CD4-positive, alpha-beta T cell (primary cell): ENCODE measurements at regions of chr3 and their contacts with region 1.

Region 1: GRCh38 chr3:36944012-36944640 is 728 bp downstream of the TRANK1 start:
- DNase-seq: peak; percentile 2 to 55 (median 22)
- ATAC-seq: peak; percentile 35
- H3K4me3 ChIP-seq: peak overlapping the region; percentile 79
- H3K4me3 Mint-ChIP-seq: peak overlapping the region; percentile 89
- H3K27ac ChIP-seq: peak overlapping the region in 1 of 2 donors; percentile 61
- H3K27ac Mint-ChIP-seq: peak overlapping the region; percentile 73
- H3K4me1 ChIP-seq: peaks cover 22% of the 10 kb centered on the region
- H3K4me1 Mint-ChIP-seq: peaks cover 21% of the 10 kb centered on the region
- H3K27me3 ChIP-seq: no peaks in the 10 kb centered on the region
- H3K27me3 Mint-ChIP-seq: no peaks in the 10 kb centered on the region
- CTCF ChIP-seq: no peak

Region 2: DNA sequence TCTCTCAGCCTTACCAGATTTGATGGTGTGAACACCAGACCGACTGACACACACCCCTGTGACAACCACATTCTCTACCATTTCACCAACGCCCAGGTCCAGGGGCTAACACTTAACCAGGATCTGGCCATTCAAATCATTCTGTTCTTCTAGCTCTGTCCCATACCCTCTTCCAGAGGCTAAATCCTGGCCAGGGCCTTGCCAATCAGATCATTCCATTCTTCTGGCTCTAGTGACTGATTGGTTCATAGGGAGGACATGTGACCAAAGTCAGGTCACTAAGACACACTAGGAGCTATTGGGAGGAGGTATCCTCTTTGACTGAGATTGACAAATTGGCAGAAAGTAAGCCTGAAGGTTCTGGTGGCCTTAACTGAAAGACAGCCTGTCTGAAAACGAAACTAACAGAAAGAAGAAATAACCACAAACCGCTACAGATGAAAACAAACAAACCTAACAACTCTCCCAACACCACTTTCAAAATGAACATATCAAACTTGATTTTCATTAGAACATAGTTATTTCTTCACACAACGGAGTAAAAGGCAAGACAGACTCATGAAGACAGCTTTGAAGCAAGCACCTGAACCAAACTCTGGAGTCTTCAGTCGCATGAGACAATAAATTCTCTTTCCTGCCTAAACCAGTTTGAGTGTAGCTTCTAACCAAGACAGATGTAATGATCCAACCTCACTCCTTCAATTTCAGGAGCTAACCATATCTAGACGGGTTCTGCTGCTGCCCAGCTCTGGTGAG is 67.8 kb before region 1 on chr3:
- CTCF ChIA-PET with region 1: no interaction called
- POLR2A ChIA-PET with region 1: interaction called, 19 read pairs
- intact Hi-C with region 1: no loop called
- DNase-seq: peak in 6 of 14 experiments; percentile 6 to 90 (median 42)
- ATAC-seq: peak; percentile 92
- H3K4me3 ChIP-seq: peak overlapping the region; percentile 40
- H3K4me3 Mint-ChIP-seq: peak overlapping the region; percentile 69
- H3K27ac ChIP-seq: peak overlapping the region; percentile 77 to 80
- H3K27ac Mint-ChIP-seq: peak overlapping the region; percentile 96
- H3K4me1 ChIP-seq: peaks cover 23% of the 10 kb centered on the region
- H3K4me1 Mint-ChIP-seq: peaks cover 72% of the 10 kb centered on the region
- H3K27me3 ChIP-seq: no peaks in the 10 kb centered on the region
- H3K27me3 Mint-ChIP-seq: no peaks in the 10 kb centered on the region
- CTCF ChIP-seq: no peak

Region 3: GRCh38 chr3:37174532-37175126 is 230.5 kb after region 1 on chr3 and contains the start of gene LRRFIP2:
- CTCF ChIA-PET with region 1: no interaction called
- POLR2A ChIA-PET with region 1: no interaction called
- intact Hi-C with region 1: no loop called
- DNase-seq: peak in 4 of 14 experiments; percentile 14 to 58 (median 36)
- ATAC-seq: peak; percentile 46
- H3K4me3 ChIP-seq: peak within 1 kb of the TSS; percentile 79
- H3K4me3 Mint-ChIP-seq: peak within 1 kb of the TSS; percentile 93
- H3K27ac ChIP-seq: no peak within 1 kb of the TSS
- H3K27ac Mint-ChIP-seq: peak within 1 kb of the TSS; percentile 79
- H3K4me1 ChIP-seq: peaks cover 11% of the 10 kb centered on the region
- H3K4me1 Mint-ChIP-seq: peaks cover 58% of the 10 kb centered on the region
- H3K27me3 ChIP-seq: no peaks in the 10 kb centered on the region
- H3K27me3 Mint-ChIP-seq: no peaks in the 10 kb centered on the region
- CTCF ChIP-seq: no peak
- total RNA-seq, gene LRRFIP2: 34.2 to 34.8 TPM